Prostate gland (tissue), 2 donors: ENCODE measurements at regions of chr3 and their contacts with region 1.

Region 1: GRCh38 chr3:38125308-38126120 is 11.4 kb downstream of the ACAA1 start:
- DNase-seq: no peak
- H3K4me3 ChIP-seq: no peak overlapping the region
- H3K27ac ChIP-seq: no peak overlapping the region
- H3K4me1 ChIP-seq: no peaks in the 10 kb centered on the region
- H3K27me3 ChIP-seq: no peaks in the 10 kb centered on the region
- CTCF ChIP-seq: no peak
- POLR2A ChIP-seq: no peak

Region 2: DNA sequence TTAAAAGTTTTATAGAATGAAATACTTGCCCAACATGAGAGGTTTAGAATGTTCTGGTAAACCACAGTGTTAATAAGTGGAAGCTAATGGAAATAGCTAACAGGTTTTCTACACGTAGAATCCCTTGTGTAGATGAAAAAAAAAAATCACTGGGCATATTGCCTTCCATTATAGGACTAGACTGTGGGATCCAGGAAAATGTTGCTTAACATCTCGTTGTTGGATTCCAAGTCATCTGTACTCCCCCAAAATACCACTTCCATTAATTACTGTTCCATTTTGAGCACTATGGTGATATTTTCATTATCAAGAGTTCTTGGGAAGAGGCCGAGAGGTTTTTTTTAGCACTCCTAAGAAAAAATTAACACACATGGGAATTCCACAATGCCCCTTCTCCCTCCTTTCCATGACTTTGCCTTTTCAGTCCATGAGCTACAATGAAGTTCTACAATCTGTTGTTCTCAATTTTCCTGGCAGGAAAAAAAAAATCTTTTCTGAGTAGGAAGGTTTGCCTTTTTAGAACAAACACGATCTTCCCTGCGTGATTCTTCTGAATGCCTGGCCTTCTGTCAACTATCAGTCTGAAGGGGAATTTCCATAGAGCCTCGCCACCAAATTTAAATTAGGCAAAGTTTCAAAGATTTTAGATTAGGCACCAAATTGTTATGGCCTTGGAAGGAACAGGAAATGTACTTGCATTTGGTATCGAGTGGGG is 338.2 kb before region 1 on chr3:
- intact Hi-C with region 1: no loop called
- DNase-seq: no peak
- H3K4me3 ChIP-seq: no peak overlapping the region
- H3K27ac ChIP-seq: peak overlapping the region; percentile 27 to 37
- H3K4me1 ChIP-seq: no peaks in the 10 kb centered on the region
- H3K27me3 ChIP-seq: no peaks in the 10 kb centered on the region
- CTCF ChIP-seq: no peak
- POLR2A ChIP-seq: no peak

Region 3: DNA sequence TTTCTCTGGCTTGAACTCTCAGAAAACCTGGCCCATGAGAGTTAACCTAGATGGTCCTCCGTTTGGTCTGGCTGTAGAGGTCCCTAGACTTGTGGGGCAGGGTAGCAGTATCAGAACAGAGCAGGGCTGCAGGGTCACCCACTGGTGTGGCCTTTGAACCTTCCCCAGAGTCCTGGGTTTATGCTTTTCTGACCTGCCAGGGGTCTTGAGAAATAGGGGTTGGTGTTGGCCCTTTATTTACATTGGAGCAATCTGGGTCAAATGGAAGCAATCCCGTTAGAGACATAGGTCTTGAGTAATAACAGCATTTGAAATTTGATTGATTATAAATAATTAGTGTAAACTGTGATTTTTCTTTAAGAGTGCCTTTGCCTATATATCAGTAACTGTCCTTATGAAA is 62.7 kb before region 1 on chr3:
- intact Hi-C with region 1: loop called (anchors 2 kb)
- DNase-seq: no peak
- H3K4me3 ChIP-seq: no peak overlapping the region
- H3K27ac ChIP-seq: no peak overlapping the region
- H3K4me1 ChIP-seq: no peaks in the 10 kb centered on the region
- H3K27me3 ChIP-seq: no peaks in the 10 kb centered on the region
- CTCF ChIP-seq: no peak
- POLR2A ChIP-seq: no peak